ENCODE measurements at regions of chr14 and their contacts with region 1.

Region 1: GRCh38 chr14:69153131-69153872 is 383 bp upstream of the DCAF5 start:
- DNase-seq: peak; percentile 86 to 95 (median 90)
- ATAC-seq: peak; percentile 90
- H3K4me3 ChIP-seq: peak overlapping the region; percentile 90
- H3K27ac ChIP-seq: peak overlapping the region; percentile 66
- H3K4me1 ChIP-seq: peaks cover 19 to 20% of the 10 kb centered on the region in 2 experiments; a peak in 4 of 5 replicates
- H3K27me3 ChIP-seq: no peaks in the 10 kb centered on the region
- CTCF ChIP-seq: no peak
- EP300 ChIP-seq: no peak
- POLR2A ChIP-seq: peak; percentile 62
- RAD21 ChIP-seq: no peak

Region 2: DNA sequence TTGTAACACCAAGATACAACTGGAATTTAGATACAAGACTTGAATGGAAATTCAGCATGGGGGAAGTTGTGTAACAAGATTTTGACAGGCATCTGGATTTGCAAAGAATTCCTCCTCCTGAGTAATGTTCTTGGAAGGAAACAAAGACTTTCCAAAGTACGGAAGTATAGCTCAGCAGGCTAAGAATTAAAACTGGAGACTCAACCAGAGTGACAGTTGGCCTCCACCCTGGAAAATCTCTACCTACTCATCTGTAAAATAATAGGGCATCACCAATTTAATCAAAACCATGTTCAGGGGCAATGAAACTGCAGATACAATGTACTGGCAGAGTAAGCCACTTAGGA is 15.1 kb before region 1 on chr14:
- CTCF ChIA-PET with region 1: no interaction called
- POLR2A ChIA-PET with region 1: interaction called, 12 read pairs
- in situ Hi-C with region 1: no loop called
- intact Hi-C with region 1: loop called (anchors 2 kb)
- DNase-seq: no peak
- ATAC-seq: no peak
- H3K4me3 ChIP-seq: no peak overlapping the region
- H3K27ac ChIP-seq: no peak overlapping the region
- H3K4me1 ChIP-seq: peaks cover 0 to 9% of the 10 kb centered on the region in 2 experiments; a peak in 2 of 5 replicates
- H3K27me3 ChIP-seq: no peaks in the 10 kb centered on the region
- CTCF ChIP-seq: no peak
- EP300 ChIP-seq: no peak
- POLR2A ChIP-seq: no peak
- RAD21 ChIP-seq: no peak

Region 3: GRCh38 chr14:69191340-69192111 is 38.2 kb after region 1 on chr14 and contains the start of gene EXD2:
- CTCF ChIA-PET with region 1: no interaction called
- POLR2A ChIA-PET with region 1: interaction called, 3 read pairs
- in situ Hi-C with region 1: no loop called
- intact Hi-C with region 1: loop called (anchors 5 kb)
- DNase-seq: peak; percentile 72 to 92 (median 81)
- ATAC-seq: peak; percentile 98
- H3K4me3 ChIP-seq: peak within 1 kb of the TSS; percentile 63
- H3K27ac ChIP-seq: peak within 1 kb of the TSS; percentile 58
- H3K4me1 ChIP-seq: peaks cover 0 to 5% of the 10 kb centered on the region in 2 experiments; a peak in 2 of 5 replicates
- H3K27me3 ChIP-seq: no peaks in the 10 kb centered on the region
- CTCF ChIP-seq: no peak
- EP300 ChIP-seq: peak; percentile 19; the same call in 1 of the 2 replicates
- POLR2A ChIP-seq: peak; percentile 61
- RAD21 ChIP-seq: no peak
- polyA plus RNA-seq, gene EXD2: 1.6 TPM